ENCODE measurements at regions of chr11 and their contacts with region 1.

Region 1: GRCh38 chr11:86244522-86245368 is at the start of gene EED:
- DNase-seq: peak; percentile 93
- H3K4me3 ChIP-seq: peak within 1 kb of the TSS; percentile 89 to 91
- H3K27ac ChIP-seq: peak within 1 kb of the TSS; percentile 98 to 99
- H3K4me1 ChIP-seq: no peaks in the 10 kb centered on the region
- H3K27me3 ChIP-seq: no peaks in the 10 kb centered on the region
- CTCF ChIP-seq: peak in 2 of 4 experiments; percentile 11 to 18
- POLR2A ChIP-seq: peak; percentile 58
- total RNA-seq, gene EED: 18.1 to 20.9 TPM

Region 2: DNA sequence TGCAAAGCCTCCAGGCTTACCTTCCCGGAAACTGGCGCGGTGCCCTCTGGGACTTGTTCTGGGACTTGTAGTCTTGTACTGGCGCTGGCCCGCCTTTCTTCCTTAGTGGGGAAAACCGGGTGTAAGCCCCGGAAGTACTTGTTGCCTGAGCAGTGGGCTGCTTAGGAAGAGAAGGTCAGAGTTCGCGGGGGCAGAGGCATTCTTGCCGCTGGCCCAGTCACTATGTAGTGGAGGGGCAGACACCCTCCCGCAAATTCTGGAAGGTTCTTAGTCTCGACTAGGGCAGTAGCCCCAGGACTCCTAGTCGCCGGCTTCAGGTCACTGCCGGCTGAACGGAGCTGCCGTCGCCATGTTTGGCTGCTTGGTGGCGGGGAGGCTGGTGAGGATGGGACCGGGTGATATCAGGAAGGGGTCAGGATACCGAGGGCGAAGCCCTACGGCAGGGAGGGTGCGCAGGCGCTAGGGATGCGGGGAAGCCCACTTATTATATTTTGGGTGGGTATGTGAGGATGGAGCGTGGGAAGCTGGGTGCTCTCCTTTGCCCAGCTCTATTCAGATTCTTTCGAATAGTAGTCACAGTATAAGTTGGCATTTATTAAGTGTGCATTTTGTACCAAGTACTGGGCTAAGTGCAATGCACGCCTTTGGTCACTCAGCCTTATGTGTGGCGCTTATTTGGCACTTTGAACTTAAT is 57.5 kb after region 1 on chr11 and contains the start of gene HIKESHI:
- intact Hi-C with region 1: loop called (anchors 5 kb)
- DNase-seq: peak; percentile 100
- H3K4me3 ChIP-seq: peak within 1 kb of the TSS; percentile 68 to 86
- H3K27ac ChIP-seq: peak within 1 kb of the TSS; percentile 74 to 77
- H3K4me1 ChIP-seq: peaks cover 5% of the 10 kb centered on the region
- H3K27me3 ChIP-seq: no peaks in the 10 kb centered on the region
- CTCF ChIP-seq: peak in 1 of 4 experiments; percentile 7
- POLR2A ChIP-seq: peak; percentile 29
- total RNA-seq, gene HIKESHI: 29.4 to 38.9 TPM